WTC11 (cell line): ENCODE measurements at regions of chr12 and their contacts with region 1.

Region 1: DNA sequence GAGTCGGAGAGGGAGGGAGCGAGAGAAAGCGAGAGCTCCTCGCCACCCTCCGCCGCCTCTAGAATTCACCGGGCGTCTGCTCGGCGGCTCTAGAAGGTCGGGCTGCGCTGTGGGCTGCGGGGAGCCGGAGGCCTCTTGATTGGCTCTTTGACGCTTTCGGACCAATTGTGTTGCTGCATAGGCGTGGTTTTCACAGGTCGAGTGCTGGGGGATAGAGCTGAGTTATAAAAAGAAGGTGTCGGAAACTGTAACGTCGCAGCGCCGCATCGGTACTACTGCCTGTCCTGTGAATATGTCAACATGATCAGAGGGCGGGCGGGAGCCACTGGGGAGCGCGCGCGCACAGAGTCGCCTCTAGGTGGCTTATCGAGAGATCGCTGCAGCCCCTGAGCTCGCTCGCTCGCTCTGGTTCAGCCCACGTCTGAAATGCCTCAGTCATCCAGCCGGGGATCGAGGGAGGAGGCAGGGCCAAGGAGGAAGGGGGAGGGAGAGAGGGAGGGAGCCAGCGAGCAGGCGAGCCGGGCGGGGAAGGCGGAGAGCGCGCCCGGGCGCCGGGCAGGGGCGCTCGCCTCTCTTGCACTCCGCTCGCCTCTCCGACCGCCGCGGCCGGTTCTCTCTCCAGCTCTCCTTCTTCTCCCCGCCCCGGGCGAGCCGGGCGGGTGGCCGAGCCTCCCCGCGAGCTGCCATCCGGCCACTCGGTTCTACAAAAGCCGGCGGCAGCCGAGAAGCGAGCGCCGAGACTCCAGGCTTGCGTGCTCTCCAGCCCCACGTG is at the start of gene TBX3:
- DNase-seq: peak; percentile 90
- ATAC-seq: peak; percentile 72
- H3K4me3 Mint-ChIP-seq: peak within 1 kb of the TSS; percentile 81
- H3K27ac Mint-ChIP-seq: peak within 1 kb of the TSS; percentile 96
- H3K4me1 Mint-ChIP-seq: peaks cover 86% of the 10 kb centered on the region
- H3K27me3 Mint-ChIP-seq: peaks cover 98% of the 10 kb centered on the region
- CTCF ChIP-seq: no peak
- total RNA-seq, gene TBX3: 0.89 to 2.2 TPM (median 0.92 TPM) in 3 replicates

Region 2: GRCh38 chr12:114668151-114668885 is 16.0 kb before region 1 on chr12:
- CTCF ChIA-PET with region 1: interaction called, 24 read pairs
- POLR2A ChIA-PET with region 1: interaction called, 3 read pairs
- DNase-seq: peak; percentile 85
- ATAC-seq: peak; percentile 49
- H3K4me3 Mint-ChIP-seq: peak overlapping the region; percentile 68
- H3K27ac Mint-ChIP-seq: no peak overlapping the region
- H3K4me1 Mint-ChIP-seq: peaks cover 61% of the 10 kb centered on the region
- H3K27me3 Mint-ChIP-seq: peaks cover 100% of the 10 kb centered on the region
- CTCF ChIP-seq: no peak

Region 3: DNA sequence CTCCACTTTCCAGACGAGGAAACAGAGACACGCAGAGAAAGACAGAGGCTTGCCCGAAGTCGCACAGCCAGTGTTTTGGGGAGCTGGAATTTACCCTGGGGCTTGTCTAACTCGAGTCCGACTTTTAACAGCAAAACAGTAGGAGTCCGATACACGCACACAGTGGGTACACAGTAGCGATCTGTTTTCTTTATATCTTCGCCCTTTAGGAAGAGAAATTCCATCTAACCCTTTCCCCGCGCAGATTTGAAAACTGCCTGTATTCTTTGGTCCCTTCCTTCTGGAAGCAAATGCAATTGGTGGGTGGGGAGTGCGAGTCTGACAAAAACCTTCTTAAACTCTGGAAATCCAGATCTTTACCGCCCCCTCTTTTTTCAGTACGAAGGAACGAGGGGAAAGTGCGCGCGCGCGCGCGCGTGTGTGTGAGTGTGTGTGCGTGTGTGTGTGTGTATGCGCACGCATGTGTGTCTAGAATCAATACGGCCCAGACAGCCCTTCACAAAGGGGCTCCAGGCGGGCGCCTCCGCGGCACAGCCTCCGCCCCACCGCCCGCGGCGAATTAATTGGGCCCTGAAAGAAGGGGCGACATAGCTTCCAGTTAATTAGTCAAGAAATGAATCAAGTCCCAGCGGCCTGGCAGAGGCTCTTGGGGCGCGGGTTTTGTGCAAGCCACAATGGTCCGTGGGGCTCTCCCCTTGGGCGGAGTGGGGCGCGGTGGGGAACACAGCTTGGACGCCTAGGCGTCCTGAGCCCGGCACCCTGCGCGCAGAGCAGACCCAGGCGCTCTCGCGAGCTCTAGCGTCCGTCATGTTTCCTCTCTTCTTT is 13.7 kb after region 1 on chr12:
- CTCF ChIA-PET with region 1: interaction called, 15 read pairs
- POLR2A ChIA-PET with region 1: interaction called, 5 read pairs
- DNase-seq: no peak
- ATAC-seq: no peak
- H3K4me3 Mint-ChIP-seq: peak overlapping the region; percentile 53
- H3K27ac Mint-ChIP-seq: no peak overlapping the region
- H3K4me1 Mint-ChIP-seq: peaks cover 78% of the 10 kb centered on the region
- H3K27me3 Mint-ChIP-seq: peaks cover 100% of the 10 kb centered on the region
- CTCF ChIP-seq: no peak

Region 4: GRCh38 chr12:114703060-114703493 is 18.8 kb after region 1 on chr12:
- CTCF ChIA-PET with region 1: interaction called, 15 read pairs
- POLR2A ChIA-PET with region 1: interaction called, 5 read pairs
- DNase-seq: no peak
- ATAC-seq: peak; percentile 22; the same call in 1 of the 2 replicates
- H3K4me3 Mint-ChIP-seq: peak overlapping the region; percentile 47
- H3K27ac Mint-ChIP-seq: no peak overlapping the region
- H3K4me1 Mint-ChIP-seq: peaks cover 48% of the 10 kb centered on the region
- H3K27me3 Mint-ChIP-seq: peaks cover 89% of the 10 kb centered on the region
- CTCF ChIP-seq: no peak

Region 5: DNA sequence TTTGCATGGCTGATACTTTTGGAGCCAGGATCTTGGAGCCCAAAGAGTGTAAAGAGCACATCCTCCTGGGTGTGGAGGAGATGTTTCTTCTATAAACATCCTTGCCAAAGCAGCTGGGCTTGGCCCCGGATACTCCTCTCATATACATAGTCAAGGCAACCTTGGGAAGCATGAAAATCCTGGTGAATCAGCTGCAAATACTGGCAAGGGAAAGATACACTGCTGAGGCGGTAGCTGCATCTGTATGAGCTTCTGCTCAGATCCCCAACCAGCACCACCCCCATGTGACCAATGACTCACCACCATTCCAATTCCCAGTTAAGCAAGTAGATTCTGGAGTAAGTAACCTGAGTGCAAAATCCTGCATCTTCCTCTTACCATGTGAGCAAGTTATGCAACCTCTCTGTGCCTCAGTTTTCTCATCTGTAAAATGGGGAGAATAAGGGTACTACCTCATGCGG is 1025.8 kb after region 1 on chr12:
- CTCF ChIA-PET with region 1: no interaction called
- POLR2A ChIA-PET with region 1: no interaction called
- DNase-seq: no peak
- ATAC-seq: no peak
- H3K4me3 Mint-ChIP-seq: no peak overlapping the region
- H3K27ac Mint-ChIP-seq: no peak overlapping the region
- H3K4me1 Mint-ChIP-seq: no peaks in the 10 kb centered on the region
- H3K27me3 Mint-ChIP-seq: no peaks in the 10 kb centered on the region; the same call in 1 of the 2 replicates
- CTCF ChIP-seq: no peak